ENCODE measurements at regions of chr1 and their contacts with region 1.

Region 1: GRCh38 chr1:41812051-41812450 is 106.7 kb downstream of the HIVEP3 start:
- DNase-seq: peak; percentile 63 to 73
- H3K4me3 ChIP-seq: no peak overlapping the region
- H3K27ac ChIP-seq: no peak overlapping the region
- H3K4me1 ChIP-seq: peaks cover 12% of the 10 kb centered on the region; the same call in 1 of the 2 replicates
- H3K27me3 ChIP-seq: no peaks in the 10 kb centered on the region
- CTCF ChIP-seq: peak; percentile 88

Region 2: GRCh38 chr1:40774266-40774998 is 1037.6 kb before region 1 on chr1:
- CTCF ChIA-PET with region 1: no interaction called
- POLR2A ChIA-PET with region 1: no interaction called
- intact Hi-C with region 1: no loop called
- DNase-seq: peak; percentile 38 to 68
- H3K4me3 ChIP-seq: no peak overlapping the region
- H3K27ac ChIP-seq: no peak overlapping the region
- H3K4me1 ChIP-seq: no peaks in the 10 kb centered on the region
- H3K27me3 ChIP-seq: no peaks in the 10 kb centered on the region
- CTCF ChIP-seq: peak; percentile 87

Region 3: DNA sequence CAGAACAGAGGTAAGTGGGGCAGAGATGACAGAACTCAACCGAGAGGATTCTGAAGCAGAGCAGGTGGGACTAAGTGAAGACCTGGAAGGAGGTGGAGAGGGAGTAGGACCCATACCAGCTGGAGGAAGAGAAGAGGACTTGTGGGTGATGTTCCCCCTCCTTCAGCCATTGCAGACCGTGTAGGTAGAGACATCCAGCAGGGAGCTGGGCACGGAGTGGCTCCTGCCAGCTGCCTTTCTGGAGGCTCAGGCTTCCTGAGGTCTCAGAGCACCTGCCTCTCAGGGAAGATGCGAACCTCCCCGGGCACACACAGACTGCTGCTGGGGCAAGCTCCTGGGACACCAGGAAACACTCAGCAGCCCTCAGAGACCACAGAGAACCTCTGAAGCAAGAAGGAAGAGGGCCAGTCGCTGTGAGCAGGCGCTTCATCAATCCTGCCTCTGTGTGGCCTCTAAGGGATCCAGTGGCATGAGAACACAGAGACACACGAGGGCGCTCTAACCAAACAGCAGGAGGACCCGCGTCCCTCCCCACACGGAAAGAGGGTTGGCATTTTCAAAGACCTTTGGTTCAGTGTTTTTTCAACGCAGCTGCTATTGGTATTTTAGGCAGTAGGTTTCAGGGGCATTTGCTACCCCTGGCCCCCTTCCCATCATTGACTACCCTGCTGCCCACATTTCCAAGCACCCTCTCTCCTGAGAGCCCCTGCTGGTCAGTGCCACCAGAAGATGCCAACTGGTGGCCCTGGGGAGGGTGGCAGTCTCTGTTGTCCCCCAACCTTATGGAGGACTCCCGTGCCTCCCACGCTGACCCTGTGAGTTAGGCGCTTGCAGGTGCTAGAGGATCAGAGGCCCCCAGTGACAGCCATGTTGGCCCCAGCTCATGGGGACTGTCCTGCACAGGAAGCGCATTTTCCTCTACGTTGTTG is 238.0 kb before region 1 on chr1:
- CTCF ChIA-PET with region 1: no interaction called
- POLR2A ChIA-PET with region 1: no interaction called
- intact Hi-C with region 1: loop called (anchors 1 kb)
- DNase-seq: peak; percentile 58 to 80
- H3K4me3 ChIP-seq: no peak overlapping the region
- H3K27ac ChIP-seq: no peak overlapping the region
- H3K4me1 ChIP-seq: peaks cover 5% of the 10 kb centered on the region
- H3K27me3 ChIP-seq: no peaks in the 10 kb centered on the region
- CTCF ChIP-seq: peak; percentile 93

Region 4: DNA sequence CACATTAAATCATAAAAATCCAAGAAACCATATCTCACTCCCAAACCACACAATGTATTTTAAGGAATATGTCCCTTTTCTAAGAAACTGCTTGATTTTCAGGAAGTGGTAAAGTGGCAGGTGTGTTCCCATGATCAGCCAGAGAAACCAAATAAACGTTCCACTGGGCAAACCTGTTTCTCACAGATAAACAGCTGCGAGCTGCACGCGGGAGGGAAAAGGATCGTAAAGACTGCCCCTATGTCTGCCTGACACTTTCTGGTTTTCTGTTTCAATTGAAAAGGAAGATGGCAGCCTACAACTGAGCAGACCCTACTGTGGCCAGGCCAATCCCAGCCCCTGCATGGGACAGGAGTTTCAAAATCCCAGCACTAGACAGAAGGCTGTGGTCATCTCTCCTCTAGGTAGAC is 70.0 kb after region 1 on chr1:
- CTCF ChIA-PET with region 1: no interaction called
- POLR2A ChIA-PET with region 1: no interaction called
- intact Hi-C with region 1: loop called (anchors 2 kb)
- DNase-seq: peak; percentile 41 to 80
- H3K4me3 ChIP-seq: peak overlapping the region; percentile 21; the same call in 1 of the 2 replicates
- H3K27ac ChIP-seq: peak overlapping the region; percentile 75
- H3K4me1 ChIP-seq: peaks cover 58% of the 10 kb centered on the region
- H3K27me3 ChIP-seq: no peaks in the 10 kb centered on the region
- CTCF ChIP-seq: no peak

Region 5: DNA sequence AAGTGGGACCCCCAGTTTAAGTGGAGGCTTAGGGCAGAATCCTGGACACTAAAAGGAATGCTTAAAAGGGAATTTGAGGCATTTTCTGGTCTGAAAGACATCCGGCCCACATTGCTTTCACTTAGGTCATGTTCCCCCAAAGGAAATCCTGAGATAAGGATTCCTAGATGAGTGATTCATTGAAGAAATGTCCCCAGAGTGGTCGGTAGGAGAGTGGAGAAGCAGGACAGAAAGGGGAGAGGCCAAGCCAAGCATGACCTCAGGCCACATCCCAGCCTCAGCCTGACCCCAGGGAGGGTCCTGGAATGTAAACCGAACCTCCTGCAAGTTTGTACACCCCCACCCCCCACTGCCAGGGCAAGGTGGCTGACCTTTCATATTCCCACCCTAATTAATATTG is 90.1 kb after region 1 on chr1:
- CTCF ChIA-PET with region 1: no interaction called
- POLR2A ChIA-PET with region 1: no interaction called
- intact Hi-C with region 1: loop called (anchors 1 kb)
- DNase-seq: peak; percentile 87 to 91
- H3K4me3 ChIP-seq: peak overlapping the region; percentile 52; the same call in 1 of the 2 replicates
- H3K27ac ChIP-seq: peak overlapping the region; percentile 95
- H3K4me1 ChIP-seq: peaks cover 56% of the 10 kb centered on the region
- H3K27me3 ChIP-seq: no peaks in the 10 kb centered on the region
- CTCF ChIP-seq: no peak

Region 6: DNA sequence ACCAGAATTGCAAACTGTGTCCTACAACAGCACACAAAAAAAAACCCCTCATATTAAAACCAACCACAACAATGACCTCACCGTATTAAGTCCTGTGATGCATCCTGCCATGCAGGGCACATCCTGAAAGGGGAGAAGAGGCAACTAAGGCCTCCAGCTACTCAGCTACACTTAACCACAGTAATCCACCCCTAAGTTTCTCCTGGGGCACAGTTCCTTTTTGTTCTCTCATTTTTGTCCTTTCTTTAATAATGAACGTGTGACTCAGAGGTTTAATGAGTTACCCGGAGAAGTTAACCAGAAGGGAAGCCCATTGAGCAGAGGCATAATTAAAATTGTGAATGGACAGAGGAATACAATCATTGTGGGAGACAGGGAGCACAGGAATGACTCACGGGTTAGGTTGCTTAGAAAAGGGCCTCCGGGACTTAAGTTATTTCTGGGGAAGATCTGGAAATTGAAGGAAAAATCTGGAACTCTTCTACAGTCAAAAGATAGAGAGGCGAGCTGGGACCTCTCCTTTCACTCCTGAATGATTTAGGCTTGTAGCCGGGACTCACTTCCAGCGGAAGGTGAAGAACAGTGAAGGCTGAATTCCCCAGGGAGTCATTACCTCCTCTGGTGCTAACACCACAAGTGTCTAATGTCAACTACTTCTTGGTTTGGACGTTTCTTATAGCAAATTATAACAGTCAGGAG is 143.6 kb after region 1 on chr1:
- CTCF ChIA-PET with region 1: interaction called, 3 read pairs
- POLR2A ChIA-PET with region 1: no interaction called
- intact Hi-C with region 1: loop called (anchors 1 kb)
- DNase-seq: peak; percentile 67 to 96
- H3K4me3 ChIP-seq: peak overlapping the region; percentile 9; the same call in 1 of the 2 replicates
- H3K27ac ChIP-seq: peak overlapping the region; percentile 89
- H3K4me1 ChIP-seq: peaks cover 62% of the 10 kb centered on the region
- H3K27me3 ChIP-seq: no peaks in the 10 kb centered on the region
- CTCF ChIP-seq: no peak

Region 7: GRCh38 chr1:42146626-42147320 is 334.7 kb after region 1 on chr1:
- CTCF ChIA-PET with region 1: interaction called, 3 read pairs
- POLR2A ChIA-PET with region 1: no interaction called
- intact Hi-C with region 1: loop called (anchors 10 kb)
- DNase-seq: peak; percentile 85 to 89
- H3K4me3 ChIP-seq: no peak overlapping the region
- H3K27ac ChIP-seq: no peak overlapping the region
- H3K4me1 ChIP-seq: peaks cover 26% of the 10 kb centered on the region
- H3K27me3 ChIP-seq: no peaks in the 10 kb centered on the region; the same call in 1 of the 2 replicates
- CTCF ChIP-seq: peak; percentile 94

Measured in PC-9 (cell line).